CD8-positive, alpha-beta T cell (primary cell): ENCODE measurements at regions of chr5 and their contacts with region 1.

Region 1: DNA sequence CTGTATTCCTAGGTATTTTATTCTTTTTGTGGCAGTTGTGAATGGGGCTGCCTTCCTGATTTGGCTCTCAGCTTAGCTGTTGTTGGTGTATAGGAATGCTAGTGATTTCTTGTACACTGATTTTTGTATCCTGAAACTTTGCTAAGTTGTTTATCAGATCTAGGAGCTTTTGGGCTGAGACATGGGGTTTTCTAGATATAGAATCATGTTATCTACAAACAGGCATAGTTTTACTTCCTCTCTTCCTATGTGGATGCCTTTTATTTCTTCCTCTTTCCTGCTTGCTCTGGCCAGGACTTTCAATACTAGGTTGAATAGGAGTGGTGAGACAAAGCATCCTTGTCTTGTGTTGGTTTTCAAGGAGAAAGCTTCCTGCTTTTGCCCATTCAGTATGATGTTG is 129.9 kb downstream of the DMXL1 start:
- DNase-seq: no peak
- ATAC-seq: no peak
- H3K4me3 ChIP-seq: no peak overlapping the region
- H3K4me3 Mint-ChIP-seq: no peak overlapping the region
- H3K27ac ChIP-seq: no peak overlapping the region
- H3K27ac Mint-ChIP-seq: no peak overlapping the region
- H3K4me1 ChIP-seq: no peaks in the 10 kb centered on the region
- H3K4me1 Mint-ChIP-seq: peaks cover 10% of the 10 kb centered on the region
- H3K27me3 ChIP-seq: no peaks in the 10 kb centered on the region
- H3K27me3 Mint-ChIP-seq: no peaks in the 10 kb centered on the region
- CTCF ChIP-seq: no peak

Region 2: GRCh38 chr5:119161430-119161829 is 39.4 kb before region 1 on chr5:
- CTCF ChIA-PET with region 1: no interaction called
- POLR2A ChIA-PET with region 1: no interaction called
- intact Hi-C with region 1: loop called in 1 of 2 experiments (anchors 5 kb)
- DNase-seq: no peak
- ATAC-seq: no peak
- H3K4me3 ChIP-seq: no peak overlapping the region
- H3K4me3 Mint-ChIP-seq: no peak overlapping the region
- H3K27ac ChIP-seq: no peak overlapping the region
- H3K27ac Mint-ChIP-seq: no peak overlapping the region
- H3K4me1 ChIP-seq: no peaks in the 10 kb centered on the region
- H3K4me1 Mint-ChIP-seq: no peaks in the 10 kb centered on the region
- H3K27me3 ChIP-seq: no peaks in the 10 kb centered on the region
- H3K27me3 Mint-ChIP-seq: no peaks in the 10 kb centered on the region
- CTCF ChIP-seq: no peak

Region 3: GRCh38 chr5:119238265-119239118 is 37.7 kb after region 1 on chr5:
- CTCF ChIA-PET with region 1: interaction called, 3 read pairs
- POLR2A ChIA-PET with region 1: no interaction called
- intact Hi-C with region 1: loop called in 1 of 2 experiments (anchors 5 kb)
- DNase-seq: peak in 2 of 9 experiments; percentile 26 to 52
- ATAC-seq: peak; percentile 91
- H3K4me3 ChIP-seq: peak overlapping the region in 1 of 2 experiments; percentile 24
- H3K4me3 Mint-ChIP-seq: peak overlapping the region; percentile 52
- H3K27ac ChIP-seq: peak overlapping the region; percentile 4 to 48
- H3K27ac Mint-ChIP-seq: peak overlapping the region; percentile 88
- H3K4me1 ChIP-seq: peaks cover 14% of the 10 kb centered on the region
- H3K4me1 Mint-ChIP-seq: peaks cover 30% of the 10 kb centered on the region
- H3K27me3 ChIP-seq: no peaks in the 10 kb centered on the region
- H3K27me3 Mint-ChIP-seq: no peaks in the 10 kb centered on the region
- CTCF ChIP-seq: no peak